Naive thymus-derived CD4-positive, alpha-beta T cell (primary cell): ENCODE measurements at regions of chr18 and their contacts with region 1.

Region 1: DNA sequence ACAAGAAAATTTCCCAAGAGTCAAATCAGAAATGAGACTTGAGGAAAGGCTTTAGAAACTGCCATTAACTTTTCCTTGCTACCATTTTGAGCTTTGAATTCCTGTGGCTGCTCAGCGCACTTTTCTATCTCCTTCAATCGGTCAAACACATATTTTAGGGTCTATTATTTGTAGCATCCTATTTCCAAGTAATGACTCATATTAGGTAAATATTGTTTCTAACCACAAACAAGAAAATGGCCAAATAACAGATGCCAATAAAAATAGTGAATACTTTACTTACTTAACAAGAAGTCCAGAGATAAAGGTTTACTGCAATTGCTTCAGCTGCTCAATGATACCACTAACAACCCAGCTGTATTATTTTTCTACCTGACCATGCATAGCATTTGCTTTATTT is 29.7 kb upstream of the CCDC178 start:
- DNase-seq: no peak
- ATAC-seq: no peak
- H3K4me3 ChIP-seq: no peak overlapping the region
- H3K4me3 Mint-ChIP-seq: no peak overlapping the region
- H3K27ac ChIP-seq: no peak overlapping the region
- H3K27ac Mint-ChIP-seq: no peak overlapping the region
- H3K4me1 ChIP-seq: no peaks in the 10 kb centered on the region
- H3K4me1 Mint-ChIP-seq: no peaks in the 10 kb centered on the region
- H3K27me3 ChIP-seq: no peaks in the 10 kb centered on the region
- H3K27me3 Mint-ChIP-seq: no peaks in the 10 kb centered on the region

Region 2: GRCh38 chr18:33210575-33211189 is 259.5 kb before region 1 on chr18:
- CTCF ChIA-PET with region 1: no interaction called
- POLR2A ChIA-PET with region 1: no interaction called
- intact Hi-C with region 1: no loop called
- DNase-seq: no peak
- ATAC-seq: no peak
- H3K4me3 ChIP-seq: no peak overlapping the region
- H3K4me3 Mint-ChIP-seq: no peak overlapping the region
- H3K27ac ChIP-seq: no peak overlapping the region
- H3K27ac Mint-ChIP-seq: no peak overlapping the region
- H3K4me1 ChIP-seq: no peaks in the 10 kb centered on the region
- H3K4me1 Mint-ChIP-seq: no peaks in the 10 kb centered on the region
- H3K27me3 ChIP-seq: no peaks in the 10 kb centered on the region
- H3K27me3 Mint-ChIP-seq: no peaks in the 10 kb centered on the region

Region 3: DNA sequence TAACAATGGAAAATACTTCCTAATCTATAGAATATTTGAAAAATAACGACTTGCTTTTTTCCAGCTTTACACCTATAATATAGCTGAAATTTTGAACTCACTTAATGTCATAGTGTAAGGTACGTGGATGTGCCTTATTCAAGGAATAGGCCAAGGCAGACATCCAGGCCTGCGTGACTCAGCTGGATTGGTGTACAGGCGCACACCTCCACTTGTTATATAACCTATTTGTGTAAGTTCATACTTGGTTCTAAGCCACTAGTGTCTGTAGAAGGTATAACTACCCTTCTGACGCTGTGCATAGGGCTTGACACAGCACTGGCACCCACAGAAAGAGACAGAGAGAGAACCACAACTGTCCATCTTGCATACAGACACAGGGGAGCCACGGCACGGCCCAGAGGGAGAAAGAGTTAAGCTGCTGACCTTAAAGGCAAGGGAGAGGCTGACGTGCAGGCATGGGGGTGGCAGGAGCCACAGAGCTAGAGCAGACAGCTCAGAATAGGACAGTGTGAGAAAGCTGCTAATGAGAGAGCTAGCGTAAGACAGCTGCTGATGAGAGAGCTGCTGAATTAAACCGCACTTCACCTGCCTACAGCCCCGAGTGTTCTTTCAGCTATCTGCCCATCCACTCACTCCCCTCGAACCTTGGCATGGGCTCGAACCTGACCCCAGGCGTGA is 45.8 kb before region 1 on chr18:
- CTCF ChIA-PET with region 1: no interaction called
- POLR2A ChIA-PET with region 1: no interaction called
- intact Hi-C with region 1: loop called in 1 of 2 experiments (anchors 10 kb)
- DNase-seq: no peak
- ATAC-seq: no peak
- H3K4me3 ChIP-seq: no peak overlapping the region
- H3K4me3 Mint-ChIP-seq: no peak overlapping the region
- H3K27ac ChIP-seq: no peak overlapping the region
- H3K27ac Mint-ChIP-seq: no peak overlapping the region
- H3K4me1 ChIP-seq: no peaks in the 10 kb centered on the region
- H3K4me1 Mint-ChIP-seq: no peaks in the 10 kb centered on the region
- H3K27me3 ChIP-seq: no peaks in the 10 kb centered on the region
- H3K27me3 Mint-ChIP-seq: no peaks in the 10 kb centered on the region

Region 4: GRCh38 chr18:33804258-33804657 is 334.0 kb after region 1 on chr18:
- CTCF ChIA-PET with region 1: no interaction called
- POLR2A ChIA-PET with region 1: no interaction called
- intact Hi-C with region 1: no loop called
- DNase-seq: no peak
- ATAC-seq: no peak
- H3K4me3 ChIP-seq: no peak overlapping the region
- H3K4me3 Mint-ChIP-seq: no peak overlapping the region
- H3K27ac ChIP-seq: no peak overlapping the region
- H3K27ac Mint-ChIP-seq: no peak overlapping the region
- H3K4me1 ChIP-seq: no peaks in the 10 kb centered on the region
- H3K4me1 Mint-ChIP-seq: no peaks in the 10 kb centered on the region
- H3K27me3 ChIP-seq: no peaks in the 10 kb centered on the region
- H3K27me3 Mint-ChIP-seq: peaks cover 0 to 2% (median 0%) of the 10 kb centered on the region in 5 donors